ENCODE measurements at regions of chr3 and their contacts with region 1.

Region 1: GRCh38 chr3:65772758-65773157 is 266.0 kb downstream of the MAGI1 start:
- DNase-seq: no peak
- ATAC-seq: no peak
- H3K4me3 Mint-ChIP-seq: no peak overlapping the region
- H3K27ac Mint-ChIP-seq: no peak overlapping the region
- H3K4me1 Mint-ChIP-seq: no peaks in the 10 kb centered on the region
- H3K27me3 Mint-ChIP-seq: no peaks in the 10 kb centered on the region

Region 2: DNA sequence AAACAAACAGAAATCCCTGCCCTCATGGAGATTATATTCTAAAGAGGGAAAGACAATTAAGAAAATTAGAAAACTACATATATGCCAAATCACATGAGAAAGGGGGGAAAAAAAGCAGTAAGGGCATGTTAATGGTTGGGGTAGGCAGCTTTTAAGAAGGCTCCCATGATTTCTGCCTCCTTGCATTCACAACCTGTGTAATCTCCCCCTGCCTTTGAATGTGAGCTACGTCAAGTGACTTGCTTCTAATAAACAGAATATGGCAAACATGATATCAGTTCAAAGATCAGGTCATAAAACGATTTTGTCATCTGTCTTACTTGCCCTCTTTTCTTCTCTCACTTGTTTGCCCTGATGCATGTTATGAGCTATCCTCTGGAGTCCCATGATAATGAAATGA is 411.3 kb before region 1 on chr3:
- CTCF ChIA-PET with region 1: no interaction called
- POLR2A ChIA-PET with region 1: no interaction called
- intact Hi-C with region 1: no loop called
- DNase-seq: no peak
- ATAC-seq: no peak
- H3K4me3 Mint-ChIP-seq: no peak overlapping the region
- H3K27ac Mint-ChIP-seq: no peak overlapping the region
- H3K4me1 Mint-ChIP-seq: peaks cover 2% of the 10 kb centered on the region
- H3K27me3 Mint-ChIP-seq: peaks cover 16% of the 10 kb centered on the region

Region 3: DNA sequence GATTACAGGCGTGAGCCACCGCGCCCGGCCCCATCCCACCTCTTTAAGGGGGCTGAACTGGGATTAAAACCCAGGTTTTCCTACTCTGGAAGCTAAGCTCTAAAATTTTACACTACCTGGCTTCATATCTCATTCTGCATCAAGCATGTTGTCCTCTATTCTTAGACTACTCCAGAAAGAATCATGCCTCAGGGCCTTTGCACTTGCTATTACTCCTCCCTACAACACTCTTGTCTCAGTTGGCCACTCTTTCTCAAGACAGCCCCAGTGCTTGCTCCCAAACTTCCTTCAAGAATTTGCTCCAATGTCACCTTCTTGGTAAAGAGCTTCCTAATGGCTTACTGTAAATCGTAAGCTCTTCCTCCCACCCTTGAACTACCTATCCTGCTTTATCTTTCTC is 255.8 kb before region 1 on chr3:
- CTCF ChIA-PET with region 1: no interaction called
- POLR2A ChIA-PET with region 1: interaction called, 10 read pairs
- intact Hi-C with region 1: no loop called
- DNase-seq: no peak
- ATAC-seq: no peak
- H3K4me3 Mint-ChIP-seq: no peak overlapping the region
- H3K27ac Mint-ChIP-seq: no peak overlapping the region
- H3K4me1 Mint-ChIP-seq: no peaks in the 10 kb centered on the region
- H3K27me3 Mint-ChIP-seq: no peaks in the 10 kb centered on the region

Region 4: DNA sequence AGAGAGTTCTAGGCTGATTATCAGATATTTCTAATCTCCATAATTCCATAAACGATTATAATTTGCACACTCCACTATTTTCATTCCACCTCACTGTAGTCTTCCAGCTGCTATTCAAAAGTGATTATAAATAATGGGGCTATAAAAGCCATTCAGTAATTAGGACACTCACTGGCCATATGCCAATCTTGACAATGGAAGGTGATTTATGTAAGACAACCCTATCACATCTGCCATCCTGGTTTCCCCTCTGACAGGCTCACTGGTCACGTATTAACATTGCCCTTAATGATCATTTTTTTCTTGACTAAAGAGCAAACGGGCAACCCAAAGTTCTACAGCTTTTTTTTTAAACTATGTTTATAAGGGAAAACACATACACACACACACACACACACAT is 136.4 kb before region 1 on chr3:
- CTCF ChIA-PET with region 1: no interaction called
- POLR2A ChIA-PET with region 1: no interaction called
- intact Hi-C with region 1: no loop called
- DNase-seq: no peak
- ATAC-seq: no peak
- H3K4me3 Mint-ChIP-seq: no peak overlapping the region
- H3K27ac Mint-ChIP-seq: no peak overlapping the region
- H3K4me1 Mint-ChIP-seq: no peaks in the 10 kb centered on the region
- H3K27me3 Mint-ChIP-seq: no peaks in the 10 kb centered on the region

Measured in activated CD4-positive, alpha-beta T cell treated with anti-CD3 and anti-CD28 coated beads for 36 hours (primary cell).